A549 (cell line): ENCODE measurements at regions of chr10 and their contacts with region 1.

Region 1: GRCh38 chr10:114403541-114404161 is 651 bp downstream of the AFAP1L2 start:
- DNase-seq: peak; percentile 33 to 67
- ATAC-seq: peak; percentile 38 to 77; a peak in 4 of 6 replicates
- H3K4me3 ChIP-seq: peak overlapping the region; percentile 83
- H3K27ac ChIP-seq: peak overlapping the region; percentile 74 to 97
- H3K4me1 ChIP-seq: peaks cover 48% of the 10 kb centered on the region
- CTCF ChIP-seq: peak; percentile 50
- EP300 ChIP-seq: no peak
- POLR2A ChIP-seq: no peak
- RAD21 ChIP-seq: peak; percentile 58 to 70

Region 2: GRCh38 chr10:114195079-114195478 is 208.6 kb before region 1 on chr10:
- CTCF ChIA-PET with region 1: no interaction called
- POLR2A ChIA-PET with region 1: no interaction called
- DNase-seq: no peak
- ATAC-seq: no peak
- H3K4me3 ChIP-seq: no peak overlapping the region
- H3K27ac ChIP-seq: no peak overlapping the region
- H3K4me1 ChIP-seq: no peaks in the 10 kb centered on the region
- CTCF ChIP-seq: no peak
- EP300 ChIP-seq: no peak
- POLR2A ChIP-seq: no peak
- RAD21 ChIP-seq: no peak

Region 3: GRCh38 chr10:114367041-114367818 is 36.4 kb before region 1 on chr10:
- CTCF ChIA-PET with region 1: interaction called, 10 read pairs
- POLR2A ChIA-PET with region 1: interaction called, 7 read pairs
- DNase-seq: peak in 1 of 2 experiments; percentile 20
- ATAC-seq: peak; percentile 63 to 69; a peak in 5 of 6 replicates
- H3K4me3 ChIP-seq: peak overlapping the region; percentile 4; the same call in 2 of the 3 replicates
- H3K27ac ChIP-seq: peak overlapping the region; percentile 78 to 90
- H3K4me1 ChIP-seq: peaks cover 59% of the 10 kb centered on the region
- CTCF ChIP-seq: no peak
- EP300 ChIP-seq: no peak
- POLR2A ChIP-seq: no peak
- RAD21 ChIP-seq: no peak; a peak in 1 of 5 replicates

Region 4: DNA sequence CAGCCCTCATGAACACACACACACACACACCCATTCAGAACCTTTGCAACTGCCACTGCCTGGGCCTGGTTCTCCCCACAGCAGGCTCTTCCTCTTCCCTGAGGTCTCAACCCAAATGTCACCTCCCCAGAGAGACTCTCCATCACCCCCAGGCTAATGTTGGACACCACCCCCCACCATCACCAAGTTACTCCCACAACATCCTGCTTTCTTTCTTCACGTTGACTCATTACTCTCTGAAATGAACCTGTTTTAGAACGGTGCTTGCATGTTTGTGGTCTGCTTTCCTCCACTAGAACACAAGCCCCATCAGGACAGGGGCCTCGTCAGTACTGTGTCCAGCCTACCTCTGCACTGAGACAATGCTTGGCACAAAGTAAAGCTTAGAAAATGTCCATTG is 15.4 kb before region 1 on chr10:
- CTCF ChIA-PET with region 1: interaction called, 43 read pairs
- POLR2A ChIA-PET with region 1: interaction called, 5 read pairs
- DNase-seq: no peak
- ATAC-seq: no peak
- H3K4me3 ChIP-seq: no peak overlapping the region
- H3K27ac ChIP-seq: peak overlapping the region; percentile 39 to 75; a peak in 4 of 6 replicates
- H3K4me1 ChIP-seq: peaks cover 53% of the 10 kb centered on the region
- CTCF ChIP-seq: no peak
- EP300 ChIP-seq: no peak
- POLR2A ChIP-seq: no peak
- RAD21 ChIP-seq: no peak

Region 5: DNA sequence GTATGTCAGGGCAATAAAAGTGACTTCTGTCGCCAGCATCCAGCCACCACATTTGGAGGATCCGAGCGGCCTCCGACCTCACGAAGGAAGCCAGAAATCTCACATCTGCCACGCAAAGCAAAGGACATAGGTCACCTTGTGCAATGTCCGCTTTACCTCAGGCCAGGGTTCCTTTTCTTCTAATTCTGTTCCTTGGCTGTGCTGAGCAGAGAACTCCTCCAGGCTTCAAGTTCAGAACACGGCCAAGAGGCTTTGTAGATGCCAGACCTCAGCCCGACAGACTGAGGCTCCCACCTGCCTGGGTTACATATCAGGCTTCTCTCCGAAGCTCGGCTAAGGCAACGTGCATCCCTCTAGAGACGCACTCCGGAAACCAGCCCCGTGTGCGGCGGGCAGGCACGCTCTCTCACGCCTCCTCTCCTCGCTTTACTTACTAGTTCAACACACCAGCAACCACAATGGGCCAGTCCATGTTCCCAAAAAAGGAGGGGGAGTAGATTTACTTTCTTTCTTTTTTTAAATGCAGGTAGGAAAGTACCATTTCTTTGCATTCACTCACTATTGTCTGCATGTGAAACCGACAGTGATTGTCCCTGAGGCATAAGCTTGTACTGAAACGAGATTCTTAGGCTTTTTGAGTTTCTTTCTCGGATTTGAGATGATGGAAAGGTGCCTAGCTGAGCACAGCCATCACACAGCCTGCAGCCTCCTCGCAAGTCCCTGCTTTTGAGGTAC is 123.0 kb after region 1 on chr10:
- CTCF ChIA-PET with region 1: no interaction called
- POLR2A ChIA-PET with region 1: no interaction called
- DNase-seq: peak; percentile 91 to 96
- ATAC-seq: peak; percentile 99
- H3K4me3 ChIP-seq: peak overlapping the region; percentile 48
- H3K27ac ChIP-seq: peak overlapping the region; percentile 83 to 87
- H3K4me1 ChIP-seq: peaks cover 39% of the 10 kb centered on the region
- CTCF ChIP-seq: no peak
- EP300 ChIP-seq: no peak
- POLR2A ChIP-seq: peak; percentile 80
- RAD21 ChIP-seq: 0 out of 5 replicates have a peak, but pooled peaks of 1 of the 2 experiments have one; percentile 13